Activated naive CD8-positive, alpha-beta T cell treated with anti-CD3 and anti-CD28 coated beads, Interleukin-2, amount 10 ng/mL, durations not matched to agents 7 days and 5 days (primary cell): ENCODE measurements at regions of chr17 and their contacts with region 1.

Region 1: GRCh38 chr17:42388381-42389134 is at the start of gene STAT3:
- DNase-seq: peak; percentile 100
- ATAC-seq: peak; percentile 93
- H3K4me3 Mint-ChIP-seq: peak within 1 kb of the TSS; percentile 94
- H3K27ac Mint-ChIP-seq: peak within 1 kb of the TSS; percentile 99
- H3K4me1 Mint-ChIP-seq: peaks cover 41% of the 10 kb centered on the region
- H3K27me3 Mint-ChIP-seq: no peaks in the 10 kb centered on the region
- total RNA-seq, gene STAT3: 128 to 131 TPM

Region 2: GRCh38 chr17:42337442-42337841 is 51.1 kb before region 1 on chr17:
- POLR2A ChIA-PET with region 1: interaction called, 14 read pairs
- DNase-seq: peak; percentile 63
- ATAC-seq: peak; percentile 78
- H3K4me3 Mint-ChIP-seq: peak overlapping the region; percentile 74
- H3K27ac Mint-ChIP-seq: peak overlapping the region; percentile 84
- H3K4me1 Mint-ChIP-seq: peaks cover 50% of the 10 kb centered on the region
- H3K27me3 Mint-ChIP-seq: no peaks in the 10 kb centered on the region

Region 3: DNA sequence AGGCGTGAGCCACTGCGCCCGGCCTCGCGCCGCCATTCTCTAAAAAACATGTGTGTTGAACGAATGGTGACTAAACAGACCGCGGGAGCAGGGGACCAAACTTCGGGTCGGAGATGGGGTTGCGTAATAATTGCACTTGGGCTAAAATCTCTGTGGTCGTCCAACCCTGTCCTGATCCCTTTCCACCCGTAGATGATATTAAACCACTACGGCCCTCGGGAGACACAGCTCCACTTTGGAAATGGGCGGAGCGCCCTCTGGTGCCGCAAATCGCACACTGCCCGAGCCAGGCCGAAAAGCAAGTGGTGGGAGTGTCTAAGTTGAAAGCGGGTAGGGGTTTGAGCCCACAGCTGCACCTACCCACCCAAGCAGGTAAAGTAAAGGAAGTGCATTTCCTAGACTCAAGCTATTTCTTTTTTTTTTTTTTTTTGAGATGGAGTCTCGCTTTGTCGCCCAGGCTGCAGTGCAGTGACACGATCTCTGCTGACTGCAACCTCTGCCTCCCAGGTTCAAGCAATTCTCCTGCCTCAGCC is 17.5 kb after region 1 on chr17:
- POLR2A ChIA-PET with region 1: interaction called, 13 read pairs
- DNase-seq: peak; percentile 89
- ATAC-seq: peak; percentile 63
- H3K4me3 Mint-ChIP-seq: no peak overlapping the region
- H3K27ac Mint-ChIP-seq: no peak overlapping the region
- H3K4me1 Mint-ChIP-seq: peaks cover 17% of the 10 kb centered on the region
- H3K27me3 Mint-ChIP-seq: no peaks in the 10 kb centered on the region

Region 4: DNA sequence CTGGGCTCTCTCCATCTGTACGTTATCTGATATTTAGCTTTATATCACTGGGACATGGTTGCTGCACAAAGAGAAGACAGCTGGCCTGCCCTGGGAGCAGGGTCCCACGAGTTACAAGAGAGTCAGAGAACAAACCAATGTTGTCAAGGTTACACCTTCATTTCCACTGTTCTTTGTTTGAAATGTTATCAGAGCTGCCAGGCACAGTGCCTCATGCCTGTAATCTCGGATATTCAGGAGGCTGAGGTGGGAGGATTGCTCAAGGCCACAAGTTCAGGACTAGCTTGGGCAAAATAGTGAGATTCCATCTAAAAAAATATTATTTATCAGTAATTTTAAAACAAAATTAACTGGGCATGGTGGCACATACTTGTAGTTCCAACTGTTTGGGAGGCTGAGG is 104.8 kb after region 1 on chr17:
- POLR2A ChIA-PET with region 1: no interaction called
- DNase-seq: no peak
- ATAC-seq: no peak
- H3K4me3 Mint-ChIP-seq: no peak overlapping the region
- H3K27ac Mint-ChIP-seq: no peak overlapping the region
- H3K4me1 Mint-ChIP-seq: peaks cover 14% of the 10 kb centered on the region
- H3K27me3 Mint-ChIP-seq: peaks cover 3% of the 10 kb centered on the region

Region 5: GRCh38 chr17:42512626-42513250 is 124.2 kb after region 1 on chr17:
- POLR2A ChIA-PET with region 1: no interaction called
- DNase-seq: no peak
- ATAC-seq: no peak
- H3K4me3 Mint-ChIP-seq: no peak overlapping the region
- H3K27ac Mint-ChIP-seq: no peak overlapping the region
- H3K4me1 Mint-ChIP-seq: peaks cover 12% of the 10 kb centered on the region
- H3K27me3 Mint-ChIP-seq: peaks cover 4% of the 10 kb centered on the region